ENCODE measurements at regions of chr19 and their contacts with region 1.

Region 1: DNA sequence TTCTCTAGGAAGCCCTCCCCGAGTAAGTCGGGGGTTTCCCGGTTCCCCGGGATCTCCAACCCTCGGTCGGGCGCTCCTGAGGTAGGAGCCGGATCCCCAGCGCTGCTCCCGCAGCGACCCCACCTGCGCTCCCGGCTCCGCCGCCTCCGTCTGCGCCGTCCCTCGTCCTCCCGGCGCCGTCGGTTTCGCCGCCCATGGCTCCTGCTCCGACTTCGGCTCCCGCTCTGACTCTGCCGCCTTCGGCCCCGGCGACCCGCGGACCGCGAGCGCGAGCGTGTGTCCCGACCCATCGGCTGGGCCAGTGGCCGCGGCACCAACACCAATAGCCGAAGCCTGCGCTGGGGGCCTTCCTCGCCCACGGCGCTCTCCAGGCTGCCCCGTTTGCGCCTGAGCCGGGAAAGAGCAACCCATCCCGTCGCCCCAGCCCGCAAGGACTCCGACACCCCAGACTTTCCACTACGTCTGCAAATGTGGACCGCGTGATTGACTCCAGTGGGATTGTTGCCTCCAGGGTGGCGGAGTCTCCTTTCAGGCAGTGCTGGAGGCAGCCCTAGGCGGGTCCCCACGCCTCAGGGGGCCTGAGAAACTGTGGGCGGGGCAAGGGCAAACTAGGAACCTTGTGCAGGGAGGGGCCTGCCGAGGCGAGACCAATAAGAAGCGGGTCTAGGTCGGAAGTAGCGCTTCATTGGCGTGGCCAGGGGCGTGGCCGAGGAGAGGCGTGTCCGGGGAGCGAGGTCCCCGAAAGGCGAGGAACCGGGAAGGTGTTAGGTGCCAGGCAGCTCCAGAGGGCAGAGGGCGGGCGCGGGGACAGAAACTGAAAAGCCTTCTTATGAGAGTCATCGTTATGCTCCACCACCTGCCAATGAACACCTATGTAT is at the start of gene CACTIN:
- DNase-seq: peak; percentile 98 to 100 (median 99)
- H3K4me3 ChIP-seq: peak within 1 kb of the TSS; percentile 76 to 79
- H3K4me3 Mint-ChIP-seq: peak within 1 kb of the TSS; percentile 86 to 98 (median 96)
- H3K27ac ChIP-seq: peak within 1 kb of the TSS; percentile 87
- H3K27ac Mint-ChIP-seq: peak within 1 kb of the TSS; percentile 98 to 100 (median 99)
- H3K4me1 ChIP-seq: peaks cover 27% of the 10 kb centered on the region
- H3K4me1 Mint-ChIP-seq: peaks cover 13 to 34% (median 25%) of the 10 kb centered on the region in 4 donors
- H3K27me3 ChIP-seq: no peaks in the 10 kb centered on the region
- H3K27me3 Mint-ChIP-seq: no peaks in the 10 kb centered on the region
- total RNA-seq, gene CACTIN: 44.0 to 50.4 TPM

Region 2: GRCh38 chr19:3505598-3506383 is 120.9 kb before region 1 on chr19 and contains the start of gene FZR1:
- CTCF ChIA-PET with region 1: no interaction called
- POLR2A ChIA-PET with region 1: interaction called, 3 read pairs
- intact Hi-C with region 1: loop called (anchors 1 kb)
- DNase-seq: peak; percentile 99 to 100 (median 100)
- H3K4me3 ChIP-seq: peak within 1 kb of the TSS; percentile 73 to 77
- H3K4me3 Mint-ChIP-seq: peak within 1 kb of the TSS; percentile 87 to 96 (median 92)
- H3K27ac ChIP-seq: peak within 1 kb of the TSS; percentile 91
- H3K27ac Mint-ChIP-seq: peak within 1 kb of the TSS; percentile 96 to 99 (median 97)
- H3K4me1 ChIP-seq: peaks cover 52% of the 10 kb centered on the region
- H3K4me1 Mint-ChIP-seq: peaks cover 33 to 62% (median 46%) of the 10 kb centered on the region in 4 donors
- H3K27me3 ChIP-seq: no peaks in the 10 kb centered on the region
- H3K27me3 Mint-ChIP-seq: no peaks in the 10 kb centered on the region
- total RNA-seq, gene FZR1: 73.3 to 73.7 TPM